ENCODE measurements at regions of chr12 and their contacts with region 1.

Region 1: GRCh38 chr12:98516184-98516873 is 939 bp downstream of the TMPO start:
- DNase-seq: peak in 8 of 10 donors; percentile 58 to 93 (median 74)

Region 2: DNA sequence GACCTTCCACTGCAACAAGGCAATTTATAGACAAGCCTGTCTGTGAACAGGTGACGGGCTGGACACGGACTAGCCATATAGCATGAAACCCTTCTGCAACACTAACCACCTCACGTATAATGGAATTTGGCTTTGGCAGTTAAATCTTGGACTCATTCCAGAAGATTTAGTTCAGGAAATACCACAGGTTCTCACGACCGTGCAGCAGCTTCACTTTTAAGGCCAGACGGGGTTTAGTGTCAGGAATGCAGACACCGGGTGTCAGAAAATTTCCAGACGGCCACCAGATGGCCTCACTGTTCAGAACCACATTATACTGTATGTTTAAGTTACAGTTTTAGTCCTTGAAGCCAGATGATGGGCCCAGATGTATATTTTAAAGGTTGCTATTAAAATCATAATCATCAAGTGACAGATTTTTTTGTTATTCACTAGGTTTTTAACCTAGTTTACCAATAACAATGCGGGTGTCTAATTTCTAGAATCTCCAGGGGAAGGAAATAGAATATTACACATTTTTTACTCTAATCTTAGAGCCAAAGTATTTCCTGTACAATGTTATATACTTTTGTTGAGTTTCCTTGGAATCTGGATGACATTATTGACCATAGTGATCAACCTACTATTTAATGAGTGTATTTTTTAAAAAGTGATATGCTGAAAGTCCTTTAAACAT is 91.5 kb before region 1 on chr12:
- intact Hi-C with region 1: loop called (anchors 2 kb)
- DNase-seq: peak in 8 of 10 donors; percentile 62 to 93 (median 68)

Region 3: DNA sequence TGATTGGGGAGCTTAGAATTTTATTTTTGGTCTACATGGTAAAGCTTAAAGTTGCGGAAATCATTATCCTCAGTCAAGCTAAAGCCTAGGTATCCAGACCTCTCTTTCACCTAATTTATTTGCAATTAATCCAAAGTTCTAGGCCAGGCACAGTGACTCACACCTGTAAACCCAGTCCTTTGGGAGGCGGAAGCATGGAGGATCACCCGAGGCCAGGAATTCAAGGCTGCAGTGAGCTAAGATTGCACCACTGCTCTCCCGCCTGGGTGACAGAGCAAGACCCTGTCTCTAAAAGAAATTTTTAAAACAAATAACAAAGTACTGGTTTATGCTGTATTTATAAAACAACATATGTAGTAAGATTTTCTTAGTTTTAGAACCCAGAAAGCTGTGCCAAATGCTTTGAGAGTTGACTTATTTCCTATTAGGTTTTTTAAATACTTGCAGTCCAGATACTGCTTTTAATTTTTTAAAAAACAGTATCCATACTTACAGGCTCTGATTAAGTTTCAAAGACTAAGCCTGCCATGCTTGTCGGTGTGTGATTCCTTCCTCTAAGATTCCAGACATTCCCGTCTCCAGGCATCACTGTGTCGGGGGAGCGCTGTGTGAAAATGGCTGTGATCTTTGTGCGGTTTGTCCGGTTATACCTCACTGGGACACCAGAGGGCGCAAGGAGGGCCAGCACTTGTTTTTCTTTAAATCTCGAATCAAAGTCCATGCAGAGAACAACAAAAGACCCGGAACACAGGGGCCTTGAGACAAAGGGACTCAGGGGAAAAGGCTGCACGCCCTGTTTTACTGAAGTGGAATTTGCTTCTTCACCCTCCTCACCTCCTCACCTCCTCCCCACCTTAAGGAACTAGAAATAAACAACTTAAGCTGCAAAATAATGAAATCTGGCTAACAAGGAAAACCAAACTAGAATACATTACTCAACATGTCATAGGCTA is 25.6 kb before region 1 on chr12:
- intact Hi-C with region 1: loop called (anchors 1 kb)
- DNase-seq: peak; percentile 73 to 97 (median 88)

Region 4: DNA sequence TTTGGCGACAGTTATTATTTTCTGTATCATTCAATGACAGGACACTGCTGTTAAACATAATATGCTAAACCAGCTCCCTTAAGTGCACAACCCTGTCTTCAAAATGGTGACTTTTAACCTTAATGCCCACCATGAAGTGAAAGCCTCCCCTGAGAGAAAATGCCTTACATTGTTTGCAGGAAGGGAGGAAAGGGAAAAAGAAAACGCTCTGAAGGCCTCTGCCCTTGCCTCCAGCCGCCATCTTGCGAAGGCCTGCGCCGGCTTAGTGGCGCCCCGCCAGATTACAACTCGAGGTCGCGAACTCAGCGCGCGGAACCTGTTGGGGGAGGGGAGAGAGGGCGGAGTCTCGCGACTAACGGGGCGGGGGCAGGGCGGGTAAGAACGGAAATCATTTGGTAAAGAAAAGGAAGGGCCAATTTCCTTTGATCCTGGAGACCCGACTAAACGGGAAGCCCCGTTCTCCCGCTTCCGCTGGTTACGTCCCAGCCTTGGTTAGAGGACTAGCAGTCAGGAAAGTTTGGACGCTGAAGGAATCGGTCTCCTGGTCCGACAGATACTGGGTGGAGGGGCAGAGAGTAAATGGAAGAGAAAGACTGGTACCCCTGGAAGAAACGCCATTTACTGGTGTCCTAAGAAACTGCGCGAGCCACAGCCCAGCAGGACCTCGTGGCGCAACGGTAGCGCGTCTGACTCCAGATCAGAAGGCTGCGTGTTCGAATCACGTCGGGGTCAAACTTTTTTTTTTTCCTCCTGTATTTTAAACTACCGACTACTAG is 12.5 kb before region 1 on chr12:
- intact Hi-C with region 1: loop called (anchors 1 kb)
- DNase-seq: peak; percentile 80 to 98 (median 85)

Region 5: GRCh38 chr12:98644711-98645402 is 128.5 kb after region 1 on chr12 and contains the starts of genes APAF1 and IKBIP:
- intact Hi-C with region 1: loop called (anchors 10 kb)
- DNase-seq: peak; percentile 92 to 100 (median 96)